Activated naive CD4-positive, alpha-beta T cell treated with anti-CD3 and anti-CD28 coated beads for 36 hours (primary cell): ENCODE measurements at regions of chr14 and their contacts with region 1.

Region 1: GRCh38 chr14:35285168-35286002 is 6.8 kb upstream of the PSMA6 start:
- DNase-seq: peak; percentile 47
- H3K4me3 Mint-ChIP-seq: peak overlapping the region; percentile 35
- H3K27ac Mint-ChIP-seq: peak overlapping the region; percentile 96
- H3K4me1 Mint-ChIP-seq: peaks cover 55% of the 10 kb centered on the region
- H3K27me3 Mint-ChIP-seq: no peaks in the 10 kb centered on the region

Region 2: DNA sequence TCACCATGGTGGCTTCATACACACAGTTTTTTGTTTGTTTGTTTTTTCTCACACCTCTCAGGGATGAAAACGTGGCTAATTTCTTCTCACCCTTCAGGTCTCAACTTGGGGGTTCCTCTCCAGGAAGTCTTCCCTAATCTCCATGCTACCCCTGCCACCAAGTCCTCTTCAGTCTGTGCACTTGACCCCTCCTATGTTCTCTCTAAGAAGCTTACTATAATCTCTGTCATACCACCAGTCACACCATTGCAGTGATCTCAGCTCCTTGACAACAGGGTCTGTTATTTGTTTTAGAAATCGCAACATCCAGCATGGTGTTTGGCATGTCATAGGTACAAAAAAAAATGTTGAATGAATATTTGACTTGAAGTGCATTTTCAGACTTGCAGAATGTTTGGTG is 79.6 kb before region 1 on chr14:
- CTCF ChIA-PET with region 1: no interaction called
- intact Hi-C with region 1: loop called (anchors 2 kb)
- DNase-seq: no peak
- H3K4me3 Mint-ChIP-seq: no peak overlapping the region
- H3K27ac Mint-ChIP-seq: no peak overlapping the region
- H3K4me1 Mint-ChIP-seq: peaks cover 30% of the 10 kb centered on the region
- H3K27me3 Mint-ChIP-seq: no peaks in the 10 kb centered on the region

Region 3: DNA sequence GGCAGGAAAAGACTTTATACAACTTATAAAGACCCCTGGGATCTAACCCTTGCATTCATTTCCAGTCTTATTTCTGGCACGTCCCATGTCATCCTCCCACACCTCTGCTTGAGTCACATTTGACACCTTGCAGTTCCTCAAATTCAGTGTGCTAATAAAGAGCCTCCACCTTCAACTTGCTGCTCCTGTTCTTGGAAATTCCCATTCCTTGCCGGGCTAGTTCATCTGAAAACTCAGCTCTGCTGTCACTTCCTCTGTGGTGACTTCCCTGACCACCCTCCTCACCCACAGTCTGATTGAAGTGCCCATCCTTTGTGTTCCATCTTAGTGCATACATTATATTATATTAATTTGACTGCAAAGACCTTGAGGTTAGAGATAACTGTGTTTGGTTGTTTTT is 30.6 kb before region 1 on chr14:
- CTCF ChIA-PET with region 1: interaction called, 6 read pairs
- intact Hi-C with region 1: loop called (anchors 1 kb)
- DNase-seq: peak; percentile 64
- H3K4me3 Mint-ChIP-seq: no peak overlapping the region
- H3K27ac Mint-ChIP-seq: no peak overlapping the region
- H3K4me1 Mint-ChIP-seq: peaks cover 25% of the 10 kb centered on the region
- H3K27me3 Mint-ChIP-seq: no peaks in the 10 kb centered on the region

Region 4: DNA sequence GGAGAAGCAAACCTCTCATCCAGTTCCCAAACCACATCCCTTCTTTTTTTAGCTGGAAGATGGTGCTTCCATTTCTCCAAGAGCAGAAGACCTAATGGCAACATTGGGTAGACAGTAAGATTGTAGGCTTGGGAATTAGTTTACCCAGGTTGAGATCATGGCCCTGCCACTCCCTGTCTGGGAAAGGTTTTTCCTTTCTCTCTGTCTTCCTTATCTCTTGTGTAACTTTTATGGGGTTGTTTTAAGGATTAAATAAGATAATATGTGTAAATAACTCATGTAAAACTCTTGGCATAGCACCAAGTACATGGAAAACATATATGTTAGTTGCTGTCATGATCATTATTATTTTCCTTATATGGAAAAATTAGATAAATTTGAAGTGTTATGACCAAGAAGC is 16.4 kb before region 1 on chr14:
- CTCF ChIA-PET with region 1: no interaction called
- intact Hi-C with region 1: no loop called
- DNase-seq: no peak
- H3K4me3 Mint-ChIP-seq: no peak overlapping the region
- H3K27ac Mint-ChIP-seq: no peak overlapping the region
- H3K4me1 Mint-ChIP-seq: no peaks in the 10 kb centered on the region
- H3K27me3 Mint-ChIP-seq: no peaks in the 10 kb centered on the region

Region 5: GRCh38 chr14:35320472-35320871 is 35.1 kb after region 1 on chr14:
- CTCF ChIA-PET with region 1: no interaction called
- intact Hi-C with region 1: no loop called
- DNase-seq: no peak
- H3K4me3 Mint-ChIP-seq: no peak overlapping the region
- H3K27ac Mint-ChIP-seq: no peak overlapping the region
- H3K4me1 Mint-ChIP-seq: peaks cover 1% of the 10 kb centered on the region
- H3K27me3 Mint-ChIP-seq: no peaks in the 10 kb centered on the region

Region 6: GRCh38 chr14:35331605-35332516 is 46.5 kb after region 1 on chr14:
- CTCF ChIA-PET with region 1: interaction called, 3 read pairs
- intact Hi-C with region 1: loop called (anchors 1 kb)
- DNase-seq: no peak
- H3K4me3 Mint-ChIP-seq: no peak overlapping the region
- H3K27ac Mint-ChIP-seq: peak overlapping the region; percentile 94
- H3K4me1 Mint-ChIP-seq: peaks cover 32% of the 10 kb centered on the region
- H3K27me3 Mint-ChIP-seq: no peaks in the 10 kb centered on the region

Region 7: GRCh38 chr14:35365130-35366055 is 80.0 kb after region 1 on chr14:
- CTCF ChIA-PET with region 1: interaction called, 3 read pairs
- intact Hi-C with region 1: loop called (anchors 1 kb)
- DNase-seq: peak; percentile 94
- H3K4me3 Mint-ChIP-seq: no peak overlapping the region
- H3K27ac Mint-ChIP-seq: peak overlapping the region; percentile 92
- H3K4me1 Mint-ChIP-seq: peaks cover 60% of the 10 kb centered on the region
- H3K27me3 Mint-ChIP-seq: no peaks in the 10 kb centered on the region

Region 8: DNA sequence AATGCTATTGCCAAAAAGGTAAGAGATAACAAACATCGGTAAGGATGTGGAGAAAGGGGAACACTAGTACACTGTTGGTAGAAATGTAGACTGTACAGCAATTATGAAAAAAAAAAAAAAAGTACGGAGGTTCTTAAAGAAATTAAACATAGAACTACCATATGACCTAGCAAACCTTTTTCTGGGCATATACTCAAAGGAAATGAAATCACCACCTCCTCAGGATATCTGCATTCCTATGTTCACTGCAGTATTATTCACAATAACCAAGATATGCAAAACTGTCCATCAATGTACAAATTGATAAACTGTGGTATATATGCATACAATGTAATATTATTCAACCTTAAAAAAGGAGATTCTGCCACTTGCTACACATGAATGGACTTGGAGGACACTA is 309.2 kb after region 1 on chr14:
- CTCF ChIA-PET with region 1: no interaction called
- intact Hi-C with region 1: no loop called
- DNase-seq: no peak
- H3K4me3 Mint-ChIP-seq: no peak overlapping the region
- H3K27ac Mint-ChIP-seq: no peak overlapping the region
- H3K4me1 Mint-ChIP-seq: no peaks in the 10 kb centered on the region
- H3K27me3 Mint-ChIP-seq: no peaks in the 10 kb centered on the region